WTC11 (cell line): ENCODE measurements at regions of chr12 and their contacts with region 1.

Region 1: DNA sequence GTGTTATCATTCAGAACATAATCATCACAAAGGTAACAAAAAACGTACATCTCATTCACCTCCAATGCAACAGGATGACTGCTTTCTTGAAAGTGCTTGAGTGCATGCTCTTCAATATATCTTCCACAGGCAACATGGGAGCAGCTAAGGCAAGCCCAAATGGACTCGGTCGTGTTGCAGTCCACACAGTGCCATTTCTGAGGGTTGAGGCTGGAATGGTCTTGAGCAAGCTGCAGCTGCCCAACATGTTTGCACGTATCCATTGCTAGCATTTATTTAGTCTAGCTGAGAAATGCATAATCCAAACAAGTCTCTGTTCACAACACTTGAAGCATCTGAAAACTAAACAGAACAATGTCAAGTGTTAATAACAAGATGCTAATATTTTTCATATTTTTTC is 17.3 kb downstream of the USP44 start:
- DNase-seq: no peak
- ATAC-seq: no peak
- H3K4me3 Mint-ChIP-seq: no peak overlapping the region
- H3K27ac Mint-ChIP-seq: peak overlapping the region; percentile 50
- H3K4me1 Mint-ChIP-seq: peaks cover 66% of the 10 kb centered on the region
- H3K27me3 Mint-ChIP-seq: no peaks in the 10 kb centered on the region
- CTCF ChIP-seq: no peak

Region 2: GRCh38 chr12:95473884-95474659 is 59.9 kb before region 1 on chr12 and contains the start of gene METAP2:
- CTCF ChIA-PET with region 1: interaction called, 12 read pairs
- POLR2A ChIA-PET with region 1: no interaction called
- DNase-seq: peak; percentile 97
- ATAC-seq: peak; percentile 100
- H3K4me3 Mint-ChIP-seq: peak within 1 kb of the TSS; percentile 100
- H3K27ac Mint-ChIP-seq: peak within 1 kb of the TSS; percentile 100
- H3K4me1 Mint-ChIP-seq: peaks cover 17% of the 10 kb centered on the region
- H3K27me3 Mint-ChIP-seq: peaks cover 2% of the 10 kb centered on the region; the same call in 1 of the 2 replicates
- CTCF ChIP-seq: no peak
- total RNA-seq, gene METAP2: 107 to 112 TPM (median 108 TPM) in 3 replicates

Region 3: GRCh38 chr12:95506707-95507523 is 27.1 kb before region 1 on chr12:
- CTCF ChIA-PET with region 1: no interaction called
- POLR2A ChIA-PET with region 1: no interaction called
- DNase-seq: no peak
- ATAC-seq: no peak
- H3K4me3 Mint-ChIP-seq: no peak overlapping the region
- H3K27ac Mint-ChIP-seq: no peak overlapping the region
- H3K4me1 Mint-ChIP-seq: peaks cover 11% of the 10 kb centered on the region
- H3K27me3 Mint-ChIP-seq: no peaks in the 10 kb centered on the region
- CTCF ChIP-seq: no peak

Region 4: DNA sequence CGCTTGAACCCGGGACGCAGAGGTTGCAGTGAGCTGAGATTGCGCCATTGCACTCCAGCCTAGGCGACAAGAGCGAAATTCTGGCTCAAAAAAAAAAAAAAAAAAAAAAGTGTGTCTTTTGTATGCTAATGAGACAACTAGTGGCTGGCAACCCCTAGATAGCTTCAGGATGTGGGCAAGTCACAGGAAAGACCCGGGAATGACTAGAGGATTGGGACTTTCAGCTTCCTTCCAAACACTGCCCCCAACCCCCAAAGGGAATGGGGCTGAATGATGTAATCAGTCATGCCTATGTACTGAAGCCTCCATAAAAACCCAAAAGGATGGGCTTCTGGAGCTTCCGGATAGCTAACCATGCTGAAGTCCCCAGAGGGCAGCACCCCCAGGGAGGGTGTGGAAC is 11.3 kb before region 1 on chr12:
- CTCF ChIA-PET with region 1: interaction called, 18 read pairs
- POLR2A ChIA-PET with region 1: interaction called, 3 read pairs
- DNase-seq: no peak
- ATAC-seq: peak; percentile 77
- H3K4me3 Mint-ChIP-seq: no peak overlapping the region
- H3K27ac Mint-ChIP-seq: peak overlapping the region; percentile 45; the same call in 1 of the 2 replicates
- H3K4me1 Mint-ChIP-seq: peaks cover 8% of the 10 kb centered on the region; the same call in 1 of the 2 replicates
- H3K27me3 Mint-ChIP-seq: no peaks in the 10 kb centered on the region
- CTCF ChIP-seq: no peak

Region 5: DNA sequence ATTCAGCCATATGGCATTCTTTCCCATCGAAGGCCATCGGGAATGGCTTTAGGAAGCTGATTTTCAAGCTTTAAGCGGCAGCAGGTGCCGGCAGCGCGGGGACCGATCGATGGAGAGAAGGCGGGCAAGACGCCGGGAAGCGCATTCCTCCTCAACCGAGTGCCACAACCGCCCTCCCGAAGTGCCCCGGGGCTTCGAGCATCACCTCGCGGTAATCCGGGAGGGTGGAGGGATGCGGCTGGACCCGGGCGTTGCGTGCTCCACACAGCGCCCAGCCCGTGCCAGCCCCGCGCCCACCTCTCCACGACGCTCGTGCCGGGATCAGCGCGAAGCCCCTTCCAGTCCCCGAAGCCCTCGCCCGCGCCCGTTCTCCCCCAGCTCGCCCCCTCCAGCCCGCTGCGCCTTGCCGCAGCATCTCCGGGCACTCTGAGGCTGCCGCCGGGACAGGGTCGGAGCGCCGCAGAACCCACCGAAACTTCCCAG is 14.1 kb after region 1 on chr12:
- CTCF ChIA-PET with region 1: interaction called, 15 read pairs
- POLR2A ChIA-PET with region 1: interaction called, 4 read pairs
- DNase-seq: peak; percentile 67
- ATAC-seq: peak; percentile 9
- H3K4me3 Mint-ChIP-seq: peak overlapping the region; percentile 91
- H3K27ac Mint-ChIP-seq: peak overlapping the region; percentile 91
- H3K4me1 Mint-ChIP-seq: peaks cover 48% of the 10 kb centered on the region
- H3K27me3 Mint-ChIP-seq: no peaks in the 10 kb centered on the region
- CTCF ChIP-seq: no peak

Region 6: GRCh38 chr12:95574799-95575452 is 40.9 kb after region 1 on chr12:
- CTCF ChIA-PET with region 1: interaction called, 69 read pairs
- POLR2A ChIA-PET with region 1: interaction called, 6 read pairs
- DNase-seq: no peak
- ATAC-seq: peak; percentile 44
- H3K4me3 Mint-ChIP-seq: peak overlapping the region; percentile 57
- H3K27ac Mint-ChIP-seq: peak overlapping the region; percentile 97
- H3K4me1 Mint-ChIP-seq: peaks cover 42% of the 10 kb centered on the region
- H3K27me3 Mint-ChIP-seq: no peaks in the 10 kb centered on the region
- CTCF ChIP-seq: peak; percentile 52; the same call in 1 of the 2 replicates